BJ (cell line): ENCODE measurements at regions of chr1 and their contacts with region 1.

Region 1: GRCh38 chr1:54342742-54343687 is 63.2 kb downstream of the SSBP3 start:
- DNase-seq: no peak
- H3K4me3 ChIP-seq: no peak overlapping the region
- H3K27me3 ChIP-seq: no peaks in the 10 kb centered on the region
- CTCF ChIP-seq: no peak

Region 2: DNA sequence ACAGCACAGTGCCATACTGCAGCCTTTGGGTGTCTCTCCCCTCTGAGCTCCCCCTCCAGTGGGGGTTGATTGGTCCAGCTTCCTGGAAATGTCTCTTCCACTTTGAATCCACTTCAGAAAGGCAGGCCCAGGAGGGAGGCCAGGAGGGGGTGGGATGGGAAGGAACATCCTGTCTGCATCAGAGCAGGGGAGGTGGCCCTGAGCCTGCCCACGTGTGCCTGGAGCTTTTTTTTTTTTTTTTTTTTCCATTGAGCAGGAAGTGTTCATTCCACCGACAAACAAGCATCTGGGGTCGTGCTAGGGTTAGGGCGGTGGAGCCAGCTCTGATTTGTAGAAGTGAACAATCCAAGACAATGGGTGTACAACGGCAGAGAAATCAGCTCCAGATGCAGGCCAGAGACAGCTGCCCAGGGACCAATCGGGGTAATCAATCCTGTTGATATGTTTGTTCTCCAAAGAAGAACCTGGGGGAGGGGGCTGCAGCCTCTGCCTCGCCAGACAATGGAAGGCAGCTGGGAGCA is 30.2 kb before region 1 on chr1:
- CTCF ChIA-PET with region 1: no interaction called
- POLR2A ChIA-PET with region 1: no interaction called
- DNase-seq: peak; percentile 30
- H3K4me3 ChIP-seq: no peak overlapping the region
- H3K27me3 ChIP-seq: no peaks in the 10 kb centered on the region
- CTCF ChIP-seq: no peak

Region 3: GRCh38 chr1:54323324-54323739 is 19.7 kb before region 1 on chr1:
- CTCF ChIA-PET with region 1: no interaction called
- POLR2A ChIA-PET with region 1: interaction called, 13 read pairs
- DNase-seq: no peak
- H3K4me3 ChIP-seq: no peak overlapping the region
- H3K27me3 ChIP-seq: no peaks in the 10 kb centered on the region
- CTCF ChIP-seq: 0 out of 2 replicates have a peak, but pooled peaks have one; percentile 4

Region 4: GRCh38 chr1:54973205-54973921 is 630.3 kb after region 1 on chr1:
- CTCF ChIA-PET with region 1: no interaction called
- POLR2A ChIA-PET with region 1: no interaction called
- DNase-seq: no peak
- H3K4me3 ChIP-seq: no peak overlapping the region
- H3K27me3 ChIP-seq: no peaks in the 10 kb centered on the region
- CTCF ChIP-seq: peak; percentile 62